Activated T-helper 2 cell treated with anti-CD3 and anti-CD28 coated beads, Interferon-gamma antibody, Interleukin-2, Interleukin-4, amounts not matched to agents 10 μg/mL and 5 μg/mL and 100 μg/mL, durations not matched to agents 14 hours and 24 hours and 36 hours (primary cell): ENCODE measurements at regions of chr3 and their contacts with region 1.

Region 1: DNA sequence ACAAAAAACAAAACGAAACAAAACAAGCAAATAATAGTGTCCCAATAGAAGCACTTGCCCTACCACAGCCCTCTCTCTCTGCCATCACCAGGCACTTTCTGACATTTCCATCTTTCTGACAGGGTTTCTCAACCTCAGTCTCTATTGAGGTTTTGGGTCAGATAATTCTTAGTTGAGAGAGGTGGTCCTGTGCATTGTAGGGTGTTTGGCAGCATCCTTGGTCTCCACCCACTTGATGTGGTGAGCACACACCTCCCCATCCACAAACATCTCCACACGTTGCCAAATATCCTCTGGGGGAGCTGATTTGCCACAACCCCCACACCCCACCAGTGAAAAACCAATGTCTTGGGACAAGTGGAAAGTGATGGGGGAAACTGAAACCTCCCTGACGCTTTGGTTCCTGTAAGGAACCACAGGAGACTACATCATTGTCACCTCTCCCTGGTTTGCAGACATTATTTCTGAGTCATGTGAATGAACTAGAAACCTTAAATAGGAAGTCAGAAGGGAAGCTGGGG is 733.7 kb upstream of the CFAP20DC start:
- DNase-seq: peak; percentile 18
- H3K4me3 Mint-ChIP-seq: no peak overlapping the region
- H3K27ac Mint-ChIP-seq: peak overlapping the region; percentile 43
- H3K4me1 Mint-ChIP-seq: peaks cover 39% of the 10 kb centered on the region
- H3K27me3 Mint-ChIP-seq: no peaks in the 10 kb centered on the region

Region 2: GRCh38 chr3:59559721-59560435 is 223.7 kb before region 1 on chr3:
- intact Hi-C with region 1: loop called (anchors 5 kb)
- DNase-seq: no peak
- H3K4me3 Mint-ChIP-seq: no peak overlapping the region
- H3K27ac Mint-ChIP-seq: peak overlapping the region; percentile 56
- H3K4me1 Mint-ChIP-seq: peaks cover 20% of the 10 kb centered on the region
- H3K27me3 Mint-ChIP-seq: no peaks in the 10 kb centered on the region

Region 3: DNA sequence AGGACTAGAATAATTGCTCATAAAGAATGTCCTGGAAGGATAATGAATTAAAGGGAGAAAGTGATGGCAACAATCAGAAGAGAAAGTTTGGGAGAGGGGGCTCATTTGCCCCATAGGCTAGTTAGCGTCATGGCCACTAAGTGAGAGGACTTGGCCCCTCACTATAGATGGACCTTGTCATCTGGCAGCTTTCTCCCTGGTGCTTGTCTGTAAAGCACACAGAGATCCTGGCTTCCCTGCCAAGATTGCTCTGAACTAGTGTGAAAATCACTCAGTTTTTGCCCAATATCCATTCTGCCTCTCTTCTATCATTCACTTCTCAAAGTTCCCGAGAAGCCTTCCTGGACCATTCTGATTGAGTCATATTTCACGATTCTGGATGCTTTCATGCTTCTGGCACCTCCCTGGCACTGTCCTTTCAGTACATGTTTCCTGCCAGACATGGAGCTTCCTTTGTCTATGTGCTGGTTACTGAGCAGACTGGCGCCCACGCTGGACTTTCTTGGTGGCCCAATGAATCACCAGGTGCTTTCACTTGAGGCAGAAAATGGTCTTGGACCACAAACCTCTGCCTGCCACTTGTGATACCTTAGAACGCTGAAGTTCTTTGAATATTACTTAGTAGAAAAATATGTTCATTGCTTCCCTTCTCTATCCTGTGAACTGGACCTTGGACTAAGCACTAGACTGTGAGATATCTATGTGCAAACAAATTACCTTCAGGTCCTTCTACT is 24.1 kb before region 1 on chr3:
- intact Hi-C with region 1: loop called (anchors 1 kb)
- DNase-seq: no peak
- H3K4me3 Mint-ChIP-seq: no peak overlapping the region
- H3K27ac Mint-ChIP-seq: peak overlapping the region; percentile 9
- H3K4me1 Mint-ChIP-seq: peaks cover 71% of the 10 kb centered on the region
- H3K27me3 Mint-ChIP-seq: no peaks in the 10 kb centered on the region

Region 4: DNA sequence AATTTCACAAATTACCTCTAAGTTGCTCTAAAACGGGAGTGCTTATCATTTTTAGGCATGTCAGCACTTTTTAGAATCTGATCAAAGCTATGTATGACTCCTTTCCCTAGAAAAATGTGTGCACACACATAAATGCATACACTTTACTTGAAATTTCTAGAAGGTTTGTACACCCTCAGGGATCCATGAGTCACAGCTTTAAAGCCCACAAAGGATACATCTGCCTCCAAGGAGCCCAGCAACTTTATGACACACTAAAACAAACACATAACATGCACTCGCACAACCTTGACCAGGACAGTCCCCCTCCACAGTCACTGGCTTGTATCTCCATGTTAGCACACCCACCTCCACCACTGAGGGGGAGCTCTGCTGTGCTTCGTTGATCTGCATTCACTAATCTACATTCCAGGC is 11.8 kb before region 1 on chr3:
- intact Hi-C with region 1: loop called (anchors 1 kb)
- DNase-seq: no peak
- H3K4me3 Mint-ChIP-seq: no peak overlapping the region
- H3K27ac Mint-ChIP-seq: no peak overlapping the region
- H3K4me1 Mint-ChIP-seq: peaks cover 50% of the 10 kb centered on the region
- H3K27me3 Mint-ChIP-seq: no peaks in the 10 kb centered on the region

Region 5: GRCh38 chr3:59839810-59840515 is 56.4 kb after region 1 on chr3:
- intact Hi-C with region 1: loop called (anchors 5 kb)
- DNase-seq: no peak
- H3K4me3 Mint-ChIP-seq: no peak overlapping the region
- H3K27ac Mint-ChIP-seq: peak overlapping the region; percentile 5
- H3K4me1 Mint-ChIP-seq: peaks cover 18% of the 10 kb centered on the region
- H3K27me3 Mint-ChIP-seq: no peaks in the 10 kb centered on the region

Region 6: GRCh38 chr3:60053526-60054265 is 270.2 kb after region 1 on chr3:
- intact Hi-C with region 1: loop called (anchors 10 kb)
- DNase-seq: no peak
- H3K4me3 Mint-ChIP-seq: peak overlapping the region; percentile 35
- H3K27ac Mint-ChIP-seq: peak overlapping the region; percentile 89
- H3K4me1 Mint-ChIP-seq: peaks cover 79% of the 10 kb centered on the region
- H3K27me3 Mint-ChIP-seq: no peaks in the 10 kb centered on the region

Region 7: GRCh38 chr3:60355824-60356223 is 572.3 kb after region 1 on chr3:
- intact Hi-C with region 1: no loop called
- DNase-seq: no peak
- H3K4me3 Mint-ChIP-seq: no peak overlapping the region
- H3K27ac Mint-ChIP-seq: no peak overlapping the region
- H3K4me1 Mint-ChIP-seq: no peaks in the 10 kb centered on the region
- H3K27me3 Mint-ChIP-seq: no peaks in the 10 kb centered on the region